ENCODE measurements at regions of chr3 and their contacts with region 1.

Region 1: DNA sequence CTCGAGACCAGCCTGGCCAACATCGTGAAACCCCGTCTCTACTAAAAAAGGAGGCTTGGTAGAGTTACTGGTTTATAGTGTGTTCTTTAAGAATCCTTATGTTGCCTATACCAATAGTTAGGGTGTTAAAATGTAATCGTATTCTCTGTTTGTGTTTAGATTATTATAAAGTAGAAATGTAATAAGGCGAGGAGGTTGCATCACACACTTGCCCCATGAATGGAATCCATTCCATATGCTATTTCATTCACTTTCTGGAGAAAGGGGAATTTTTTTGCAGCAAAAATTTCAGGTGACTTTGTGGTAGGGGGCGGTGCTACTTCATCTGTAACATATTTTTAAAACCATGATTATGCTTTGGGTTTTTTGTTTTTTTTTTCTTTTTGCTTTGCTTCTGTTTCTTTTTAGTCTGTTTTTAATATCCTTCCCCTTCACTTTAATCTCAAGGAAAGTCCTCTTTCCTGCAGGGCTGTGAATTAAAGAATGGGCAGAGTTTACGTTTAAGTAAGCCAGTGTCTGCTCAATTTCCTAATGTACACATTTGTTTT is 33.0 kb upstream of the MUC4 start:
- DNase-seq: no peak
- ATAC-seq: no peak
- H3K4me3 ChIP-seq: no peak overlapping the region
- H3K27ac ChIP-seq: no peak overlapping the region
- H3K4me1 ChIP-seq: peaks cover 12 to 18% of the 10 kb centered on the region in 2 experiments
- H3K27me3 ChIP-seq: no peaks in the 10 kb centered on the region
- CTCF ChIP-seq: no peak
- POLR2A ChIP-seq: no peak
- RAD21 ChIP-seq: no peak

Region 2: DNA sequence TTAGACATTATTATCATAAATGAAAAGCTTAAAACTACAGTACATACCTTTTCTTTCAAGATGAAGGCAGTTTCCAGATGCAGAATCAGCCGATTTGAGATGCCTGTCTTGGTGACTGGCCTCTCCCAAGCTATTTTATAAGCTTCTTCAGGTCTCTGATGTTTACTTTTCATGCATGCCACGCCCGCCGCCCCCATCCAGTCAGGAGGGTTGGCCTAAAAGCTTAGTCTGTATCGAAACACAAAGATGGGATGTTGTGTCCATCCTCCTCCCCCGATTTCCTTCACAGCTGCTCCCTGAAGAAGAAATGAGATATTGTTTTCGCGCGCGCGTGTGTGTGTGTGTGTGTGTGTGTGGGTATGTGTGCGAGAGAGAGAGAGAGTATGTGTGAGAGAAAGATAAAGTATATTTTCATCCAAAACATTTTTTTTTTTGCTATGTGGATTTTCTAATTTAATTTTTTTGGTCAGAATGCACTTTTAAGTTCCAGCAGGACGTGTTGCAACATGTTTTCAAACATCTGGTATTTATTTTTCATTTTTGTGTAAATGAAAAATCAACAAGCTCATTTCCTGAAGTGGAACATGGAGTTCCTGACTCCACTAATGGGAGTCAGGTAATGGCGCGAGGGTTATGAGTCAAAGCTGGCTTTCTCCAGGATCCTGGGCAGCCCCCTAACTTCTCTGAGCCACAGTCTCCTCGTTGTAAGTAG is 260.8 kb before region 1 on chr3 and contains the start of gene APOD:
- CTCF ChIA-PET with region 1: no interaction called
- POLR2A ChIA-PET with region 1: no interaction called
- RAD21 ChIA-PET with region 1: no interaction called
- intact Hi-C with region 1: no loop called
- DNase-seq: no peak
- ATAC-seq: no peak
- H3K4me3 ChIP-seq: no peak within 1 kb of the TSS
- H3K27ac ChIP-seq: no peak within 1 kb of the TSS
- H3K4me1 ChIP-seq: peaks cover 4 to 19% of the 10 kb centered on the region in 2 experiments; a peak in 3 of 4 replicates
- H3K27me3 ChIP-seq: no peaks in the 10 kb centered on the region
- CTCF ChIP-seq: no peak
- POLR2A ChIP-seq: no peak
- RAD21 ChIP-seq: no peak
- total RNA-seq, gene APOD: 0.76 TPM

Region 3: GRCh38 chr3:195809281-195809785 is 35.4 kb before region 1 on chr3:
- CTCF ChIA-PET with region 1: no interaction called
- POLR2A ChIA-PET with region 1: no interaction called
- RAD21 ChIA-PET with region 1: no interaction called
- intact Hi-C with region 1: loop called (anchors 2 kb)
- DNase-seq: no peak
- ATAC-seq: no peak
- H3K4me3 ChIP-seq: no peak overlapping the region
- H3K27ac ChIP-seq: no peak overlapping the region
- H3K4me1 ChIP-seq: peaks cover 0 to 6% of the 10 kb centered on the region in 2 experiments; a peak in 1 of 4 replicates
- H3K27me3 ChIP-seq: no peaks in the 10 kb centered on the region
- CTCF ChIP-seq: no peak
- POLR2A ChIP-seq: no peak
- RAD21 ChIP-seq: no peak